Activated CD4-positive, alpha-beta memory T cell treated with anti-CD3 and anti-CD28 coated beads for 36 hours (primary cell): ENCODE measurements at regions of chr20 and their contacts with region 1.

Region 1: GRCh38 chr20:59253779-59254319 is 46.6 kb upstream of the EDN3 start:
- DNase-seq: peak; percentile 68
- H3K4me3 Mint-ChIP-seq: peak overlapping the region; percentile 36
- H3K27ac Mint-ChIP-seq: peak overlapping the region; percentile 90
- H3K4me1 Mint-ChIP-seq: peaks cover 65% of the 10 kb centered on the region
- H3K27me3 Mint-ChIP-seq: no peaks in the 10 kb centered on the region

Region 2: GRCh38 chr20:59102841-59103299 is 151.0 kb before region 1 on chr20:
- CTCF ChIA-PET with region 1: no interaction called
- POLR2A ChIA-PET with region 1: no interaction called
- intact Hi-C with region 1: no loop called
- DNase-seq: no peak
- H3K4me3 Mint-ChIP-seq: no peak overlapping the region
- H3K27ac Mint-ChIP-seq: peak overlapping the region; percentile 18
- H3K4me1 Mint-ChIP-seq: peaks cover 13% of the 10 kb centered on the region
- H3K27me3 Mint-ChIP-seq: no peaks in the 10 kb centered on the region

Region 3: GRCh38 chr20:59269411-59270025 is 15.7 kb after region 1 on chr20:
- CTCF ChIA-PET with region 1: no interaction called
- POLR2A ChIA-PET with region 1: no interaction called
- intact Hi-C with region 1: loop called (anchors 1 kb)
- DNase-seq: peak; percentile 31
- H3K4me3 Mint-ChIP-seq: no peak overlapping the region
- H3K27ac Mint-ChIP-seq: no peak overlapping the region
- H3K4me1 Mint-ChIP-seq: peaks cover 25% of the 10 kb centered on the region
- H3K27me3 Mint-ChIP-seq: no peaks in the 10 kb centered on the region

Region 4: GRCh38 chr20:59299944-59300331 is 46.1 kb after region 1 on chr20:
- CTCF ChIA-PET with region 1: no interaction called
- POLR2A ChIA-PET with region 1: no interaction called
- intact Hi-C with region 1: no loop called
- DNase-seq: no peak
- H3K4me3 Mint-ChIP-seq: no peak overlapping the region
- H3K27ac Mint-ChIP-seq: no peak overlapping the region
- H3K4me1 Mint-ChIP-seq: peaks cover 3% of the 10 kb centered on the region
- H3K27me3 Mint-ChIP-seq: peaks cover 41% of the 10 kb centered on the region

Region 5: DNA sequence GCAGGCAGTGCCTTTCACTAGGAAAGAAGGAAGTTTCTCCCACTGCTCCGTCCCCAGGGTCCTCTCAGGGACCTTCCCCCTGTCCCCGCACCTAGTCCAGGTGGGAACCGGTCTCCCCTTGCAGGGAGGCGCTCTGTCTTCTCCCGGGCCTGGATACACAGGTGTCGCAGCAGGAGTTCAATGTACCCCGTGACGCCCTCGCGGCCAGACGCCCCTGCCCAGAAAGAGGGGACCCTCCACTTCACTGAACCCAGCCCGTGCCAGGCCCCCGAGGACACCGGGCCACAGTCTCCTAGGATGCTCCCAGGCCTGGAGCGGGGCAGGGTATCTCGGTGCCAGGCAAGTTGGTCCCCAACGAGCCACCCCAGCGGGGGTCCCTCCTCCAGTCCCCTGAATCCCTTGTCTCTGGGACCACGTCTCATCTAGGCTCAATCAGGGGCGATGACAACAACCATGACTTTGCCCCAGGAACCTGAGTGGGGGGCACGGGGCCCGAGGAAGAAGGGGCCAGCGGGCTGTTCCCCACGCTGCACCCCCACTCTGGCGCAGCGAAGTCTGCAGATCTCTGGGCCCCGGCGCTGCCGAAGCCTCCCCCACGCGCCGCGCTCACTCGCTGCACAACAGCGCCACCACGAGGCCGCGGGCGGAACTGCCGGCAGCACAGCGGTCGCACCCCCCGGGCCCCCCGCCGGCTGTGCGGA is 149.6 kb after region 1 on chr20:
- CTCF ChIA-PET with region 1: interaction called, 5 read pairs
- POLR2A ChIA-PET with region 1: no interaction called
- intact Hi-C with region 1: loop called (anchors 10 kb)
- DNase-seq: peak; percentile 77
- H3K4me3 Mint-ChIP-seq: peak overlapping the region; percentile 57
- H3K27ac Mint-ChIP-seq: no peak overlapping the region
- H3K4me1 Mint-ChIP-seq: peaks cover 2% of the 10 kb centered on the region
- H3K27me3 Mint-ChIP-seq: peaks cover 14% of the 10 kb centered on the region